ENCODE measurements at regions of chr19 and their contacts with region 1.

Region 1: DNA sequence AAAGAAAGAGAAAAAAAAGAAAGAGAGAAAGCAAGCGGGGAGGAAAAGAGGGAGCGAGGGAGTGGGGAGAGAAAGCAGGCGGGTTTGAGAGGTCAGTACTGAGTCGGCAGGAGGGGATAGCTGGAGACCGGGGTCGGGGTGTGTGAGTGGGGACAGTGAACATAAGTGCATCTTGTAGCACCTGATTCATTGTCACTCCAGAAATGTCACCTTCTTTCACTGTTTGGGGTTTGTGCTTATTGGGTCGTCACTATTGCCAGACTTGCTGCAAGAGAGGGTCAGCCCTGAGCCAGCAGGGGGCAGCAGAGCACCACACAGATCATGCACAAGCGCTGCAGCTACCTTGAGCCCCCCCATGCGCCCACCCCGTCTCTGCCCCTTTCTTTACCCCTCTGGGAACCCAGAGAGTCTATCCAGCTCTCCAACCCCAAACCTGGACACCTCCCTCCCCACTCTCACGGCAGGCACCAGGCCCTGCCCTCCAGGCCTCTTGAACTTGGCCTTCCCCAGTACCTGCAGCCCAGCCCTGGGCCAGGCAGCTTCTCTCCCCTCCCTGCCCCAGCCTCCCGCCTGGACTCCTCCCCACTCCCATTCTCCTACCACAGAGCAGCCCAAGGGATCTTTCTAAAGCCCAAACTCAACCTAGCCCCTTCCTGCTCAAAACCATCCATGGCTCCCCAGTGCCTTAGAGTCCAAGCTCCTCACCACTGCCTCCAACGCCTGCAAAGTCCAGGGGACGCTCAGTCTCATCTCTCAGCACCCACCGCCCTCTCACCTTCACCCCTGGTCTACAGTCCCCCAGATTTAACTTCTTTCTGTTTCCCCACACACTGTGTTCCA is 9.7 kb upstream of the CEACAM16 start:
- DNase-seq: peak; percentile 66 to 92 (median 80)
- ATAC-seq: peak; percentile 36 to 75 (median 57)
- H3K4me3 ChIP-seq: no peak overlapping the region
- H3K27ac ChIP-seq: no peak overlapping the region
- H3K4me1 ChIP-seq: peaks cover 27 to 29% (median 28%) of the 10 kb centered on the region in 3 donors
- H3K27me3 ChIP-seq: no peaks in the 10 kb centered on the region
- CTCF ChIP-seq: peak; percentile 83 to 95 (median 90)

Region 2: GRCh38 chr19:44764975-44765948 is 76.0 kb after region 1 on chr19:
- intact Hi-C with region 1: loop called in 2 of 3 experiments (anchors 5 to 10 kb)
- DNase-seq: no peak
- ATAC-seq: peak in 3 of 4 donors; percentile 1 to 47 (median 29)
- H3K4me3 ChIP-seq: no peak overlapping the region
- H3K27ac ChIP-seq: no peak overlapping the region
- H3K4me1 ChIP-seq: no peaks in the 10 kb centered on the region
- H3K27me3 ChIP-seq: no peaks in the 10 kb centered on the region
- CTCF ChIP-seq: no peak

Region 3: DNA sequence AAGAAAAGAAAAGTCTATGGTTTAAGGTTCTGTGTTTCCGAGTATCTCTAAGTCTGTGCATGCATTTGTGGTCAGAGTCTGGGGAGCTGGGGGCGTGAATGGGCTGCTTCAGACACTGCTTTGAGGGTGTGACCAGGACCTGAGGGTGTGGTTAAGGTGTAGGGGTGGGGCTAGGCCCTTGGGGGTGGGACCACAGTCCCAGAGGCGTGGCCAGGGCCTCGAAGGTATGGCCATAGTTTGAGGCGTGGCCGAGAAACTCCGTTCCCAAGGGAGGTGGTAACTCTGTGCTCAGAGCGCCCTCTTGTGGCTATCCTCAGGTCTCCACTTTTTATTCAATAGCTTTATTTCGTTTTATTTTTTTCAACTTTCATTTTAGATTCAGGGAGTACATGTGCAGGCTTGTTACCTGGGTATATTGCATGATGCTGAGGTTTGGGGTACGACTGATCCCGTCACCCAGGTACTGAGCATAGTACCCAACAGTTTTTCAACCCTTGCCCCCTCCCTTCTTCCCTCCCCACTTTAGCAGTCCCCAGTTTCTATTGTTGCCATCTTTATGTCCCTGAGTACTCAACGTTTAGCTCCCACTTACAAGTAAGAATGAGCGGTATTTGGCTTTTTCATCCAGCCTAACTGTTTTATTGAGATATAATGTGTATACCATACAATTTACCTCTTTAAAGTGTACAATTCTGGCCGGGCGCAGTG is 81.4 kb after region 1 on chr19:
- intact Hi-C with region 1: loop called in 2 of 3 experiments (anchors 5 to 10 kb)
- DNase-seq: peak; percentile 94 to 98 (median 96)
- ATAC-seq: peak; percentile 99 to 100 (median 100)
- H3K4me3 ChIP-seq: no peak overlapping the region
- H3K27ac ChIP-seq: no peak overlapping the region
- H3K4me1 ChIP-seq: no peaks in the 10 kb centered on the region
- H3K27me3 ChIP-seq: no peaks in the 10 kb centered on the region
- CTCF ChIP-seq: peak; percentile 75 to 88 (median 80)

Region 4: DNA sequence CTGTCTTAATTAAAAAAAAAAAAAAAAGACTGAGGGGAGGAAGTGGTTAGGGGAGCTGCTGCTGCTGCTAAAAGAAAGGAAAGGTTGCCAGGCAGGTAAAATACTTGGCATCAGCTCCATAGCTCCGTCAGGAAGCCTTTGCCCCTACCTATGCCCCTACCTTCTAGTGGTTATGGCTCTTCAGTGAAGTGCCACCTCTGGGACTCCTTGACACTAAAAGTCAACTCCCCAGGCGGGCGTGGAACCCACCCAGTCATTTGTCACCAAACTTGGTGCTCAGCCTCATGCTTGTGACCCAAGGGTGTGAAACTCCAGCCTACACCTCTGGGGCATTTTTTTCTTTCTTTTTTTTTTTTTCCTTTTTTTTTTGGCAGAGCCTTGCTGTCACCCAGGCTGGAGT is 152.0 kb after region 1 on chr19:
- intact Hi-C with region 1: loop called in 1 of 3 experiments (anchors 10 kb)
- DNase-seq: no peak
- ATAC-seq: no peak
- H3K4me3 ChIP-seq: no peak overlapping the region
- H3K27ac ChIP-seq: no peak overlapping the region
- H3K4me1 ChIP-seq: peaks cover 0 to 6% (median 4%) of the 10 kb centered on the region in 3 donors
- H3K27me3 ChIP-seq: no peaks in the 10 kb centered on the region
- CTCF ChIP-seq: no peak

Measured in pancreas (tissue), 10 donors.